ENCODE measurements at regions of chr16 and their contacts with region 1.

Region 1: DNA sequence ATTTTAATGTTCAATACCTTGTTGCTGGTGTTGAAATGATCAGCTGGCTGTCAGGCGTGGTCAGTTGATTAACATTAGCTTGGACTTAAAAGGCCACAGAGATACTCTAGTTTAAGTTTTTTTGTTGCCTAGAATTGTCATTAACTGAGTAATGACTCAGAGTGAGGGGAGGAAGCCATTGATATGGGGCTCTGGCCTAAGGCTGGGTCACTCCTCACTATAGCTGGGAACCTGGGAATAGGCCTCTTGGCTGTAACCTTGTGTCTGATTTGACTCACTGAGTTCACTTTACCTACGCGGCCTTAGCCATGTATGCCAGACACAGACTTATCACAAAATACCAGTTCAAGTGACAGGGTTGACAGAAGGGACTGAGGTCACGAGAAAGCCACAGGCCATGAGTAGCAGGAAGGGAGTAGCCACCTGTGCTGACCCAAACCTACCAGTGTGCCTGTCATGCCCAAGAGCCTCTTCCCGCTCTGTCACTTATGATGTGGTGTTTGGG is 37.9 kb upstream of the ADCY7 start:
- DNase-seq: no peak
- H3K4me3 ChIP-seq: no peak overlapping the region
- H3K27ac ChIP-seq: no peak overlapping the region
- H3K4me1 ChIP-seq: no peaks in the 10 kb centered on the region
- H3K27me3 ChIP-seq: no peaks in the 10 kb centered on the region
- CTCF ChIP-seq: no peak

Region 2: DNA sequence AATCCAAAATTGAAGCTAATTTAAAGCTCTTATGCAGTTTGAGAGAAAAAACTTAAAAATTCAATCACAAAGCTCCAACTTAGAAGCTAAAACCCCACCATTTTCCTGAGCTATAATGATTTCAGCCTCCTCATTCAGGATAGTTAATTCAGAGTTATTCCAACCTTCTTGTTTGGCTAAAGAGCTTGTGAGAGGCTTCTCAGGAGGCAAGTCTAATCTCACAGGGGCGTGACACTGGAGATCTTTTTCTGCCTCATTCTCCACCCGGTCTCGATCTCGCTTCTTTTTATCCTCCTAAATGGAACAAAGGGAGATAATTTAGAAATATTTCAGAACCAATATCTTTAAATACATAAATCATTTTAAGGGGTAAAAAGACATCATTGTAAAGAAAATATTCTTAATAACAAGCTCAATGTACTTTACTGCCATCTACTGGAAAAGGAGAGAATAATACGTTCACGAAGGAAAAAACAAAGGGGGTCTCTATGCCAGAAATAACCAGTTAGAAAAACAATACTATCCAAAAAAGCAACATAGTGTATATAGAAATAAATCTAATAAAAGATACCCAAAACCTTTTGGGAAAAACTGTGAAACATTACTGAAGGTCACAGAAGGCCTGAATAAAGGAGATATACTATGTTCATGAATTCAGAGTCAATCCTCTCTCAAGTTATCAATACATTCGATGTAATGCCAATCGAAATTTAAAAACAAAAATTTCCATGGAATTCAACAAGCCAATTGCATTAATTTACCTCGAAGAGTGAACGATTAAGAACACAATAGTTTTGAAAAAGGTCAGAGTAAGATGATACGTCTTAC is 126.4 kb after region 1 on chr16:
- intact Hi-C with region 1: loop called (anchors 10 kb)
- DNase-seq: no peak
- H3K4me3 ChIP-seq: no peak overlapping the region
- H3K27ac ChIP-seq: no peak overlapping the region
- H3K4me1 ChIP-seq: peaks cover 6% of the 10 kb centered on the region
- H3K27me3 ChIP-seq: no peaks in the 10 kb centered on the region
- CTCF ChIP-seq: peak; percentile 66